ENCODE measurements at regions of chr20 and their contacts with region 1.

Region 1: DNA sequence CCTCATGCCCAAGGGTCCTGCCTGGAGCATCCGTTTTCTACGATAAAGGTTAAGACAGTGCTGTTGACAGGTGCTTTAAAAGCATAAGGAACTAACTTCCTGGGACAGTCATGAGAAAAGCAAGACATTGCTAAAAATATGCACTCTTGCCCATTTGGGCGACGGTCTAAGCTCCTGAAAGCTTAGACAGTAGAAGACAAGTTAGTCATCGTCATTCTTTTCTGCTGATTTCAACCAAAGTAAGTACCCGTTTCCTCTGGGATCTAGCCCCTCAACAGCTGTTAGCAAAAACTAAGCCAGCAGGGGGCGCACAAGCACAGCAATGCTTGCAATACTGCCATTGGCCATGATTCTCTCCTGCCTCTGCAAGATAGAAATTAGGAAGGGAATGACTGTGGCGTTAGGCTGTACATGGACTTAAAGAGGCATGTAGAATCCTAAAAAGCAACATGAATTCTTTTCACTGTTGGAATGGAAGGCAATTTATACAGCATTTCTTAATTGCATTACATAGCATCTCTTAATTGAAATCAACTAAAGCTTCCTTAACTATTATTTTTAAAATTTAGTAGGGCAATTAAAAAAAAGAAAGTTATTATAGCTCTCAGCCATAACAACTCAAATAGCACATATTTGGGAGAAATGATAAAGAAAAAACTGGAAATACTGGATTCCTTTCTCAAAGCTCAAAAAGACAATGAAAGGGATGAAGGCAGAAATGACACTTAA is 147.8 kb upstream of the RALGAPA2 start:
- DNase-seq: peak; percentile 76 to 97 (median 91)
- H3K4me3 ChIP-seq: peak overlapping the region in 1 of 59 donors; percentile 5
- H3K27ac ChIP-seq: peak overlapping the region in 1 of 59 donors; percentile 57
- H3K27me3 ChIP-seq: peaks cover 0 to 15% (median 0%) of the 10 kb centered on the region in 45 donors
- CTCF ChIP-seq: peak; percentile 84 to 100 (median 98)

Region 2: DNA sequence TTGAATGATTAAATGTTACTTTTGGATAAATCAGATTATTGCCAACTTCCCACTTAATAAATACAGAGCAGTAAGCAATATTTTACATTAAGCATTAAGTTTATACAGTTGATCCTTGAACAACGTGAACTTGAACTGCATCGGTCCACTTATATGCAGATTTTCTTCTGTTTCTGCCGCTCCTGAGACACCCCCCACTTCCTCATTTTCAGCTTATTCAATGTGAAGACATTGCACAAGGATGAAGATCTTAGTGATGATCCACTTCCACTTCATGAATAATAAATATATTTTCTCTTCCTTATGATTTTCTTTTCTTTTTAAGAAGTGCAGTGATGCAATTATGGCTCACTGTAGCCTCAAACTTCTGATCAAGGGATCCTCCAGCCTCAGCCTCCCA is 78.8 kb after region 1 on chr20:
- intact Hi-C with region 1: no loop called
- DNase-seq: no peak
- H3K4me3 ChIP-seq: no peak overlapping the region
- H3K27ac ChIP-seq: no peak overlapping the region
- H3K27me3 ChIP-seq: peaks cover 0 to 13% (median 0%) of the 10 kb centered on the region in 45 donors
- CTCF ChIP-seq: no peak

Region 3: GRCh38 chr20:20956513-20956931 is 96.3 kb after region 1 on chr20:
- intact Hi-C with region 1: loop called (anchors 5 to 10 kb)
- DNase-seq: peak; percentile 4 to 61 (median 50)
- H3K4me3 ChIP-seq: peak overlapping the region in 13 of 59 donors; percentile 1 to 25 (median 15)
- H3K27ac ChIP-seq: peak overlapping the region in 10 of 59 donors; percentile 5 to 43 (median 12)
- H3K27me3 ChIP-seq: peaks cover 0 to 8% (median 0%) of the 10 kb centered on the region in 45 donors
- CTCF ChIP-seq: peak in 1 of 56 donors; percentile 8

Region 4: DNA sequence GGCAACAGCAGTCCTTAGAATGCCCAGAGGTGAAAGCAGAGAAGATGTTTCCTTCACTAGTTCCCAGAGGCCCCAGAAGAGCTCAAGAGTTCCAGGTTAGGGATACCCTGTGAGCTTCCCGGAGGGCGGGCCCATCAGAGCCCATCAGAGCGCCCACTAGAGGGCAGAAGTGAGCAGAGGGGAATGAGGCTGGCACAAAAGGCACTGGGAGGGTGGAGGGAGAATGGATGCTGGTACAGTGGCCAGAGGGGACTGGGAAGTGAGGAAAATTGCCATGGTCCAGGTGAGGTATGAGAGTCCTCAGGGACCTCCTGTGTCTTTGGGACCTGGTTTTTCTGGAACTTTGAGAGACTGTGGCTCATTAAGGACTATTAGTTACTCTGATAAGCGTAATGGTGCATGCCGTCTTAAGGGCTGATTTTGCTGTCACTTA is 188.6 kb after region 1 on chr20:
- intact Hi-C with region 1: loop called (anchors 2 to 5 kb)
- DNase-seq: peak in 1 of 10 donors; percentile 54
- H3K4me3 ChIP-seq: no peak overlapping the region
- H3K27ac ChIP-seq: no peak overlapping the region
- H3K27me3 ChIP-seq: peaks cover 0 to 26% (median 0%) of the 10 kb centered on the region in 45 donors
- CTCF ChIP-seq: peak in 55 of 56 donors; percentile 23 to 76 (median 56)

Region 5: DNA sequence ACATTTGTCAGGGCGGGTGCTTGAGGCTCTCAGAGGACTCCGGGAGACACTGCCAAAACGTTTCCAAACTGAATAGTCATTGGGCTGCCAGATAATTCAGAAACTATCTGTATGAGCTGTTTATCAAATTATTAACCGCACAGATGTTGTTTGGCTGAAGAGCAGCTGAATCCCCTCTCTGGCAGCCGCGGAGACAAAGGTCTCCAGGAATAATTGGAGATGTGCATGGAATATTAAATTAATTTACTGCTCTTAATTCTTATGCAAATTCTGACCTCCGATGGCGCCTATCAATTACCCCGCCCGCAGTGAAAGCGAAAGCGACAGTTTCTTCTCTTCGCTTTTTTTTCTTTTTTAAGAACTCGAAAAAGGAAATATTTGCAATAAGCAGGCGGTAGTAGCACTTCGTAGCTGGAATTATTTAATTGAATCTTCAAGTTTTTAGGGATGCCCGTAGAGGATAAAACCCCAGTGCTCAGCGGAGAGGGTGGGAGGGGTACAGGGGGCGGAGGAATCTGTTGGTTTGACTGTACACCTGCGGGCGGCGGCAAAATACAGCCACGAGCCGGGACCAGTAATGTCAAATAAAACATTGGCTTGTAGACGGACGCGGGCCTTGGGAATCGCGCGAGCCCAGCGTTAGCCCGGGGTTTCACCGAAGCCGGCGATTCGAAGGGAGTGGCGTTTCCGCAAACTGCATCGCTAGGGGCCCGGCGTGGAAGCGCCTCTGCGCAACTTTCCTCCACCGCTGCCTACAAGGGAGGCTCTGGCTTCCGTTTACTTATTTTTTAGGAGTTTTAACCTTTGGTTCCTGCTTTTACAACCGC is 239.7 kb after region 1 on chr20:
- intact Hi-C with region 1: loop called in 1 of 2 experiments (anchors 10 kb)
- DNase-seq: peak in 4 of 10 donors; percentile 18 to 53 (median 43)
- H3K4me3 ChIP-seq: peak overlapping the region; percentile 29 to 76 (median 57)
- H3K27ac ChIP-seq: peak overlapping the region in 52 of 59 donors; percentile 3 to 84 (median 60)
- H3K27me3 ChIP-seq: peaks cover 3 to 95% (median 72%) of the 10 kb centered on the region in 45 donors
- CTCF ChIP-seq: peak in 4 of 56 donors; percentile 6 to 27 (median 13)

Region 6: GRCh38 chr20:21571841-21572690 is 711.8 kb after region 1 on chr20:
- intact Hi-C with region 1: loop called in 1 of 2 experiments (anchors 5 kb)
- DNase-seq: peak in 2 of 10 donors; percentile 10 to 35
- H3K4me3 ChIP-seq: peak overlapping the region in 26 of 59 donors; percentile 4 to 45 (median 25)
- H3K27ac ChIP-seq: peak overlapping the region in 7 of 59 donors; percentile 21 to 58 (median 37)
- H3K27me3 ChIP-seq: peaks cover 0 to 4% (median 0%) of the 10 kb centered on the region in 45 donors
- CTCF ChIP-seq: peak; percentile 67 to 96 (median 88)

Region 7: GRCh38 chr20:21615617-21616080 is 755.4 kb after region 1 on chr20:
- intact Hi-C with region 1: loop called (anchors 5 to 10 kb)
- DNase-seq: peak; percentile 57 to 92 (median 86)
- H3K4me3 ChIP-seq: peak overlapping the region in 3 of 59 donors; percentile 3 to 22 (median 12)
- H3K27ac ChIP-seq: peak overlapping the region; percentile 38 to 98 (median 89)
- H3K27me3 ChIP-seq: peaks cover 0 to 12% (median 0%) of the 10 kb centered on the region in 45 donors
- CTCF ChIP-seq: peak; percentile 60 to 95 (median 86)

Measured in dorsolateral prefrontal cortex (tissue), 120 donors.